ENCODE measurements at regions of chr12 and their contacts with region 1.

Region 1: DNA sequence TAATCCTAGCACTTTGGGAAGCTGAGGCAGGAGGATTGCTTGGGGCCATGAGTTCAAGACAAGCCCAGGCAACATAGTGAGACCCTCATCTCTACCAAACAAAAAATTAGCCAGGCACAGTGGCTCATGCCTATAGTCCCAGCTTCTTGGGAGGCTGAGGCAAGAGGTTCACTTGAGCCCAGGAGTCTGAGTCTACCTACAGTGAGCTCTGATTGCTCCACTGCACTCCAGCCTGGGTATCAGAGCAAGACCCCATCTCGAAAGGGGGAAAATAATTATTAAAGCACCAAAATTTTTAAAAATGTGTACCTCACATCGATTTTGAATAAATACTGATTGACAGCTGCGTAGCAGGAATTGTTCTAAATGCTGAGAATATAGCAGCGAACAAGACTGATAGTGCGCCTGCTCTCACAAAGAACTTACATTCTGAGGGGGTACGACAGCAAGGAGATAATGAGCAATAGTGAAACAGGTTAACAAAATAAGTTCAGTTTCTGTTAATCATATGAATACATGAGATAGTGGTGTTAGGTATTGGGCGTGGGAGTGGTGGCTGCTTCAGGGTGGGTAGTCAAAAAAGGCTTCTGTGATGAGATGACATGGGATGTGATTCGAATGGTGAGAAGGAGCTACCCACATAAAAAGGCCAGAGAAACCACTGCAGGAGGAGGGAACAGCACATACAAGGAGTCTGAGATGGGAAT is 19.6 kb downstream of the HCFC2 start:
- DNase-seq: no peak
- H3K4me3 Mint-ChIP-seq: no peak overlapping the region
- H3K27ac Mint-ChIP-seq: peak overlapping the region; percentile 45
- H3K4me1 Mint-ChIP-seq: peaks cover 16% of the 10 kb centered on the region
- H3K27me3 Mint-ChIP-seq: no peaks in the 10 kb centered on the region

Region 2: GRCh38 chr12:103924761-103925641 is 158.9 kb before region 1 on chr12:
- intact Hi-C with region 1: loop called (anchors 1 kb)
- DNase-seq: peak; percentile 51
- H3K4me3 Mint-ChIP-seq: peak overlapping the region; percentile 70
- H3K27ac Mint-ChIP-seq: peak overlapping the region; percentile 81
- H3K4me1 Mint-ChIP-seq: peaks cover 50% of the 10 kb centered on the region
- H3K27me3 Mint-ChIP-seq: peaks cover 2% of the 10 kb centered on the region

Region 3: DNA sequence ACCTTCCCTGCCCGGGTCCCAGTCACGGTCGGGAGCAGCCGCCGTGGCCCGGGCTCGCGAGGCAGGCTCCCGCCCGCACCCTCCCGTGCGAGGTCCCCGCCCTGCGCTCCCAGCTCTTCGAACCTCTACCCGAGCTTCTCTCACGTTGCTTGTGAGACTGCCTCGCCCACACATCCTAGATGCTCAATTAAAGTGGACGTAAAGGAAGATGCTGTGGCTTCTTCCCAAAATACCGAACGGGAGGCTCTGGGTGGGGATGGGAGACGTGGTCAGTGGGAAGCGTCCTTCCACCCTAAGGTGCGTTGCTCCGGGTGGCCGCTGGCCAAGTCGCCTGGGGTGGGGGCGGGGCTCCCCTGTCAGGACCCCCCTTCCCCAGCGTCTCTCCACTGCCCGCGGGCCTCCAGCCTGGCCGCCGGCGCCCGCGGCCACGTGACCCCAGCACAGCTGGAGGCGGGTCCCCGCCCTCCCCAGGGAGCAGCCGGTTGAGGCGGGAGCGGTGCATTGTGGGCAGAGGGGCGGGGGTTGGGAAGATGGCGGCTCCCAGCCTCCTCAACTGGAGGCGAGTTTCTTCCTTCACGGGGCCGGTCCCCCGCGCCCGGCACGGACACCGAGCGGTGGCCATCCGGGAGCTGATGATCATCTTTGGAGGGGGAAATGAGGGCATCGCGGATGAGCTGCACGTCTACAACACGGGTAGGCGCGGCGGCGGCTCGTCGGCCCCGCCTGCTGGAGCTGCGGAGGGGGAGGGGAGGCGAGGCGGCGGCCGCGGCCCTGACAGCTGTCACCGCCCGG is 19.7 kb before region 1 on chr12 and contains the start of gene HCFC2:
- intact Hi-C with region 1: loop called (anchors 1 kb)
- DNase-seq: peak; percentile 88
- H3K4me3 Mint-ChIP-seq: peak within 1 kb of the TSS; percentile 95
- H3K27ac Mint-ChIP-seq: peak within 1 kb of the TSS; percentile 86
- H3K4me1 Mint-ChIP-seq: peaks cover 36% of the 10 kb centered on the region
- H3K27me3 Mint-ChIP-seq: peaks cover 24% of the 10 kb centered on the region
- total RNA-seq, gene HCFC2: 8.5 and 8.9 TPM in 2 replicates

Region 4: DNA sequence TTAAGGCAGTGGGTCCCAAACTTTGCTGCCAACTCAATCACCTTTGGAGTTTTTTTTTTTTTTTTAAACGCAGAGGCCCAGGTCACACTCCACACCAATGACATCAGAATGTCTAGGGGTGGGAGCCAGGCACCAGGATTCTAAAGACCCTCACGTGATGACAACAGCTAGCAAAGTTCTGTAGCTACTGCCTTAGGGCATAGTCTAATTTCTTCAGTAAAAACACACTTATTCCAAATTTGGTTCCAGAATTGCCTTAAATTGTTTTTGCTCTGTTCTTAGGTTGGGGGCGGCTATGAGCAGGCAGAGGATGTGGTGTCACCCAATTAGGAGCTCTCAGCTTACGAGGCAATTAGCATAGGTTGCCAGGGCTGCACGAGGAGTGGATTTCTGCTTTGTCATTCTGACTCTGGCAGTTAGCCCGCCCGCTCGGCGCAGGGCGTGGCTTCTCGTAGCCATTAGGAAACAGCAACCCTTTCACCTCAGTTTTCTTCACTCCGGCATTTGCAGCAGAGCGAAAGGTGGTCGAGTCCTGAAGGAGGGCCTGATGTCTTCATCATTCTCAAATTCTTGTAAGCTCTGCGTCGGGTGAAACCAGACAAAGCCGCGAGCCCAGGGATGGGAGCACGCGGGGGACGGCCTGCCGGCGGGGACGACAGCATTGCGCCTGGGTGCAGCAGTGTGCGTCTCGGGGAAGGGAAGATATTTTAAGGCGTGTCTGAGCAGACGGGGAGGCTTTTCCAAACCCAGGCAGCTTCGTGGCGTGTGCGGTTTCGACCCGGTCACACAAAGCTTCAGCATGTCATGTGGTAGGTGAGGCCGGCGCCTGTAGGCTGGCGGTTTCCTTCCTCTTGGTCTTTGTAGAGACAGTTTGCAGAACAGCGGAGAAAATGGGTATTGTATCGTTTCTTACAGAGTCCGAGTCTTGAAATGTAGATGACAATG is 202.9 kb after region 1 on chr12:
- intact Hi-C with region 1: no loop called
- DNase-seq: peak; percentile 90
- H3K4me3 Mint-ChIP-seq: peak overlapping the region; percentile 98
- H3K27ac Mint-ChIP-seq: peak overlapping the region; percentile 99
- H3K4me1 Mint-ChIP-seq: peaks cover 27% of the 10 kb centered on the region
- H3K27me3 Mint-ChIP-seq: no peaks in the 10 kb centered on the region